Activated B cell treated with CpG ODN at 0.5 μM for 24 hours (primary cell): ENCODE measurements at regions of chr1 and their contacts with region 1.

Region 1: GRCh38 chr1:146049436-146049835 is 27.9 kb upstream of the HJV start:
- DNase-seq: no peak
- ATAC-seq: no peak
- H3K4me3 Mint-ChIP-seq: no peak overlapping the region
- H3K27ac Mint-ChIP-seq: no peak overlapping the region
- H3K4me1 Mint-ChIP-seq: peaks cover 22% of the 10 kb centered on the region
- H3K27me3 Mint-ChIP-seq: no peaks in the 10 kb centered on the region
- CTCF ChIP-seq: no peak

Region 2: DNA sequence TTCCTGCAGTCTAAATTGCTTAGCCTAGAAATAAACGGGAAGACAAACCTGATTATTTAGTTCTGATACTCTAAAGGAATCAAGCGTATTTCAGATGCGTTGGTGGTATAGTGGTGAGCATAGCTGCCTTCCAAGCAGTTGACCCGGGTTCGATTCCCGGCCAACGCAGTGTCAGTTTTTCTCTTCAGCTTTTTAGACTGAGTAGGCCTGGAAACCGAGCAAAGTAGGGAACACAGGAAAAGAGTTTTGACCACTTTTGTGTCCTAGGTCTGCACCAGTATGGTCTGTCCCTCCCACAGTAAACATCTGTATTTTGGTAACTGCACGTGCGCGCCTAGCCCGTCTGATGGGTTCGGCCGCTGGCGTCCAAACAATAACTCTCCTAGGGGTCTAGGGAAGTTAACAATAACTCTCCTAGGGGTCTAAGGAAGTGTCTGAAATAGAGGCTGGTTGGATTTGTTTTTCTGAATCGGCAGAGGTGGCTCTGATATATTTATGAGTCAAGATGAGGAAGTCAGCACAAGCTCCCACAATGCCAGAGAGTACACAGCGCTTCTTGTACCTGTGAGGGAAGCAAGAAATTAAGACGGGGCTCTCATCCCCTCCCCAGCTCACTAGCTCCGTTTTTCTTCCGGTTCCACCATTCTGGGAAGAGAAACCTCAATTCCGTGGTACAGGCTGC is 12.3 kb before region 1 on chr1:
- CTCF ChIA-PET with region 1: interaction called, 5 read pairs
- POLR2A ChIA-PET with region 1: interaction called, 394 read pairs
- intact Hi-C with region 1: loop called (anchors 1 kb)
- DNase-seq: peak; percentile 61
- ATAC-seq: peak; percentile 56
- H3K4me3 Mint-ChIP-seq: peak overlapping the region; percentile 99
- H3K27ac Mint-ChIP-seq: peak overlapping the region; percentile 98
- H3K4me1 Mint-ChIP-seq: peaks cover 43% of the 10 kb centered on the region
- H3K27me3 Mint-ChIP-seq: peaks cover 2% of the 10 kb centered on the region
- CTCF ChIP-seq: no peak